ENCODE measurements at regions of chr16 and their contacts with region 1.

Region 1: DNA sequence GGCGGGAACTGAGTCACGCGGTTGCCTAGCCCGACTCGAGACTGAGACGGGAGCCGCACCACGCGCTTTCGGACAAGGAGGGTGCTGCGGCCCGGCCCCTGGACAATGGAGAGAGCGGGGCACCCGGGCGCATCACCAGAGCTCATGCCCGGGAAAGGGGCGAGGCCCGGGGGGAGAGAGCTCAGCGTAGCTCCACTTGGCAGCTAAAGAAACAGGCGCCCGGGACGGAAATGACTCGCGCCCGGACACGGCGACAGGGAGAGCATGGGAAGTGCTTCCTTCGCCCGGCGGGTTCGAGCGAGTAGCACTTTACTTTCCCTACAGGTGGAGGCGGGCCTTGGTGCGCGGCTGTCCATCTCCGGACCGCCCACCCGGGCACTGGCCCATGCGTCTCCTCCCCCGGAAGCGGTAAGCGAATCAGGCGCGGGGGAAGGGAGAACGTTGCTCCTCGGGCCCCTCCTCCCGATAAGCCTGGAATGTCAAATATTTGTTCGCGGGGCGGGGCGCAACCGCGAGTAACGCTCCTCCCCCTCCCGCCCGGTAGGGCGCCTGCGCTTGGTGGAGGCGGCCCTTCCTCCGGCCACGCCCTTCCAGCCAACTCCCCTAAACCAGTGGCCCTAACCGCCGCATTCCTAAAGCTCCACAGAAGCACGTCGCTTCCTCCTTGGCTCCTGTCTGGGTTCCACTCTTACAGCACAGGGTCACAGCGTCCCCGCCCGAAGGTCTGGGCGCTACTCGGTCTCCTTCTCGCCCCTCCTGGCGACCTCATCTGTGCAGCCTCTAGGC is 1.5 kb upstream of the ESRP2 start:
- DNase-seq: peak; percentile 87
- H3K4me3 Mint-ChIP-seq: peak overlapping the region; percentile 94
- H3K27ac Mint-ChIP-seq: peak overlapping the region; percentile 92
- H3K4me1 Mint-ChIP-seq: peaks cover 35% of the 10 kb centered on the region
- H3K27me3 Mint-ChIP-seq: peaks cover 8% of the 10 kb centered on the region

Region 2: GRCh38 chr16:68269793-68270192 is 32.4 kb after region 1 on chr16:
- CTCF ChIA-PET with region 1: interaction called, 10 read pairs
- POLR2A ChIA-PET with region 1: no interaction called
- DNase-seq: no peak
- H3K4me3 Mint-ChIP-seq: no peak overlapping the region
- H3K27ac Mint-ChIP-seq: peak overlapping the region; percentile 70
- H3K4me1 Mint-ChIP-seq: peaks cover 82% of the 10 kb centered on the region
- H3K27me3 Mint-ChIP-seq: no peaks in the 10 kb centered on the region

Measured in activated CD4-positive, alpha-beta T cell treated with anti-CD3 and anti-CD28 coated beads, Interleukin-2, amount 10 ng/mL, durations not matched to agents 7 days and 5 days (primary cell).